AG04449 (cell line): ENCODE measurements at regions of chr1 and their contacts with region 1.

Region 1: DNA sequence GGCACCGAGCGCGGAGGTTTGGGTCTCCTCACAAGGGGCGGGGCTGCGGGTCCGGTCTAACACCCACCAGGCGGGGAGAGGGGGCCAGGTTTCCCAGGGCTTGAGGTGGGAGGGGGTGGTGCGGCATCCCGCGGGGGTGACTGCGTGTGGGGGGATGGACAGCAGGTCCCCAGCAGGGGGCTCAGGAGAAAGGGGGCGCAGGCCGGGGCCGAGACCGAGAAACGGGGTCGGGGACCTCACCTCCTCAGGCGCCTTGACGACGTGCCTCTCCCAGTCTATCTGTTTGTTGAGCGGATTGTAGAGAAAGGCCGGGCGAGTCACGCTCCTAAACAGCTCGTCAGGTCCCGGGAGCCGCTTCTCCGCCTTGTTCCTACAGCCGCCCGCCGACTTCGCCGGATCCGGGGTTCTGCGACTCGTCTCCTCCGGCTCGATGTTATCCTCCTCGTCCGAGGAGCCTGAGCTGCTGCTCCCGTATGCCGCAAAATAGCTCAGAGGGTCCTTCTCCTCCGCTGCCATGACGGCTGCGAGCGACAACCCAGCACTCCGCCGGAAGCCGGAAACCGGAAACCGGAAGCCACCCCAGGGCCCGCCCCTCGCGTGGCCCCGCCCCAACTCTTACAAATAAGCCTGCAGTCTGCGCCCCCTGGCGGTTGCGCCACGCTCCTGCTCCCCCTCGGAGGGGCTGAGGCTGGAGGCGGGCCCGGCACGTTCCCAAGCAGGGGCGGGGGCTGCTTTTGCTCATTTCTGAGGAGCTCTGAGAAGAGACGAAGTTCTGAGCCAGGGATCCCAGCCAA is at the start of gene C1orf52:
- DNase-seq: peak; percentile 62
- H3K4me3 ChIP-seq: peak within 1 kb of the TSS; percentile 93
- CTCF ChIP-seq: peak; percentile 98

Region 2: GRCh38 chr1:84834419-84835064 is 424.8 kb before region 1 on chr1:
- CTCF ChIA-PET with region 1: no interaction called
- POLR2A ChIA-PET with region 1: no interaction called
- DNase-seq: no peak
- H3K4me3 ChIP-seq: no peak overlapping the region
- CTCF ChIP-seq: no peak

Region 3: GRCh38 chr1:84959294-84959693 is 300.0 kb before region 1 on chr1:
- CTCF ChIA-PET with region 1: interaction called, 11 read pairs
- POLR2A ChIA-PET with region 1: no interaction called
- DNase-seq: no peak
- H3K4me3 ChIP-seq: no peak overlapping the region
- CTCF ChIP-seq: no peak

Region 4: GRCh38 chr1:85109475-85109874 is 149.8 kb before region 1 on chr1:
- CTCF ChIA-PET with region 1: interaction called, 675 read pairs
- POLR2A ChIA-PET with region 1: interaction called, 11 read pairs
- DNase-seq: no peak
- H3K4me3 ChIP-seq: no peak overlapping the region
- CTCF ChIP-seq: peak; percentile 89

Region 5: GRCh38 chr1:85188530-85188929 is 70.8 kb before region 1 on chr1:
- CTCF ChIA-PET with region 1: interaction called, 10 read pairs
- POLR2A ChIA-PET with region 1: no interaction called
- DNase-seq: no peak
- H3K4me3 ChIP-seq: no peak overlapping the region
- CTCF ChIP-seq: no peak

Region 6: DNA sequence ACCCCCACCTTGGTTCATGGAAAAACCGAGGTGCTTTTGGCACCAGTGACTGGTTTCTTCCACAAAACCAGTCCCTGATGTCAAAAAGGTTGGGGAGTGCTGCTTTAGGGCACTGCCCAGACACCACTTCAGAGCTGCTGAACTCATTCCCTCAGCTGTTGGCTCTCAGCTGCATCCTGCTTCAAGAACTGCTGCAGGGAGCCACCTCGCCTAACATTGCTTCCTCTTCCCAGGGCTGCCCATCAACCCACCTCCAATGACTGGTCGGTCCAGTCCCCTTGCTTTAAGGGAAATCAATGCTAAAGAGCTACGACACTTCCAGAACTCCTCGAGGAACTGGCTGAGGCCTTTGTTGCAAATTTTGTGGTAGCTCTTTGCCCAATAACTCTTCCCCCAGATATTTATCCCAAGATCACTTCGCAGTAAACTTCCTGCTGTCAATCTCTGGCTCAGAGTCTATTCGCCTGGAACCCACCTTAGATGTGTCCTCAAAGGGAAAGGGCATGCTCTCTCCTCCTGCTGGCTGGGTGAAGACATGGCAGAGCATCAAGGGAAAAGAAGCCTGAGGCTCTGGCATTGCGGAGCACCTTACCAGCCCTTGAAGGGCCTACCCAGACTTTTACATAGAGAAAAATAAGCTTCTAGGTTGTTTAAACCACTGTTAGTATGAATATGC is 28.9 kb before region 1 on chr1:
- CTCF ChIA-PET with region 1: interaction called, 11 read pairs
- POLR2A ChIA-PET with region 1: no interaction called
- DNase-seq: no peak
- H3K4me3 ChIP-seq: no peak overlapping the region
- CTCF ChIP-seq: peak; percentile 26

Region 7: GRCh38 chr1:85276215-85276977 is 17.1 kb after region 1 on chr1 and contains the start of gene BCL10:
- CTCF ChIA-PET with region 1: interaction called, 146 read pairs
- POLR2A ChIA-PET with region 1: interaction called, 10 read pairs
- DNase-seq: peak; percentile 82
- H3K4me3 ChIP-seq: peak within 1 kb of the TSS; percentile 94
- CTCF ChIP-seq: no peak